CD4-positive, alpha-beta T cell (primary cell): ENCODE measurements at regions of chr17 and their contacts with region 1.

Region 1: GRCh38 chr17:50478391-50479381 is at the start of gene RSAD1:
- DNase-seq: peak; percentile 74 to 96 (median 84)
- ATAC-seq: peak; percentile 89
- H3K4me3 ChIP-seq: peak within 1 kb of the TSS; percentile 94
- H3K4me3 Mint-ChIP-seq: peak within 1 kb of the TSS; percentile 95
- H3K27ac ChIP-seq: peak within 1 kb of the TSS; percentile 68 to 83
- H3K27ac Mint-ChIP-seq: peak within 1 kb of the TSS; percentile 88
- H3K4me1 ChIP-seq: peaks cover 30% of the 10 kb centered on the region
- H3K4me1 Mint-ChIP-seq: peaks cover 23% of the 10 kb centered on the region
- H3K27me3 ChIP-seq: no peaks in the 10 kb centered on the region
- H3K27me3 Mint-ChIP-seq: no peaks in the 10 kb centered on the region
- CTCF ChIP-seq: peak; percentile 84
- total RNA-seq, gene RSAD1: 44.6 to 44.7 TPM

Region 2: GRCh38 chr17:50372758-50373556 is 105.7 kb before region 1 on chr17 and contains the starts of genes EME1 and MRPL27:
- CTCF ChIA-PET with region 1: no interaction called
- POLR2A ChIA-PET with region 1: no interaction called
- intact Hi-C with region 1: loop called in 1 of 2 experiments (anchors 5 kb)
- DNase-seq: peak; percentile 74 to 93 (median 80)
- ATAC-seq: peak; percentile 92
- H3K4me3 ChIP-seq: peak within 1 kb of the TSS; percentile 85
- H3K4me3 Mint-ChIP-seq: peak within 1 kb of the TSS; percentile 97
- H3K27ac ChIP-seq: peak within 1 kb of the TSS; percentile 97
- H3K27ac Mint-ChIP-seq: peak within 1 kb of the TSS; percentile 96
- H3K4me1 ChIP-seq: peaks cover 22% of the 10 kb centered on the region
- H3K4me1 Mint-ChIP-seq: peaks cover 22% of the 10 kb centered on the region
- H3K27me3 ChIP-seq: no peaks in the 10 kb centered on the region
- H3K27me3 Mint-ChIP-seq: no peaks in the 10 kb centered on the region
- CTCF ChIP-seq: no peak
- total RNA-seq, gene EME1: 0.36 to 0.92 TPM
- total RNA-seq, gene MRPL27: 13.7 to 14.8 TPM

Region 3: GRCh38 chr17:50425682-50426471 is 52.8 kb before region 1 on chr17 and contains the start of gene ACSF2:
- CTCF ChIA-PET with region 1: no interaction called
- POLR2A ChIA-PET with region 1: interaction called, 5 read pairs
- intact Hi-C with region 1: loop called in 1 of 2 experiments (anchors 2 kb)
- DNase-seq: peak; percentile 43 to 82 (median 65)
- ATAC-seq: peak; percentile 88
- H3K4me3 ChIP-seq: peak within 1 kb of the TSS; percentile 79
- H3K4me3 Mint-ChIP-seq: peak within 1 kb of the TSS; percentile 87
- H3K27ac ChIP-seq: peak within 1 kb of the TSS; percentile 51 to 63
- H3K27ac Mint-ChIP-seq: peak within 1 kb of the TSS; percentile 70
- H3K4me1 ChIP-seq: peaks cover 36% of the 10 kb centered on the region
- H3K4me1 Mint-ChIP-seq: peaks cover 45% of the 10 kb centered on the region
- H3K27me3 ChIP-seq: no peaks in the 10 kb centered on the region
- H3K27me3 Mint-ChIP-seq: no peaks in the 10 kb centered on the region
- CTCF ChIP-seq: no peak
- total RNA-seq, gene ACSF2: 11.9 to 13.9 TPM

Region 4: GRCh38 chr17:50541716-50542688 is 63.3 kb after region 1 on chr17:
- CTCF ChIA-PET with region 1: interaction called, 10 read pairs
- POLR2A ChIA-PET with region 1: no interaction called
- intact Hi-C with region 1: loop called in 1 of 2 experiments (anchors 10 kb)
- DNase-seq: peak; percentile 61 to 91 (median 79)
- ATAC-seq: peak; percentile 84
- H3K4me3 ChIP-seq: peak overlapping the region; percentile 65
- H3K4me3 Mint-ChIP-seq: peak overlapping the region; percentile 78
- H3K27ac ChIP-seq: no peak overlapping the region
- H3K27ac Mint-ChIP-seq: no peak overlapping the region
- H3K4me1 ChIP-seq: peaks cover 28% of the 10 kb centered on the region
- H3K4me1 Mint-ChIP-seq: peaks cover 22% of the 10 kb centered on the region
- H3K27me3 ChIP-seq: no peaks in the 10 kb centered on the region
- H3K27me3 Mint-ChIP-seq: peaks cover 6% of the 10 kb centered on the region
- CTCF ChIP-seq: peak; percentile 21

Region 5: DNA sequence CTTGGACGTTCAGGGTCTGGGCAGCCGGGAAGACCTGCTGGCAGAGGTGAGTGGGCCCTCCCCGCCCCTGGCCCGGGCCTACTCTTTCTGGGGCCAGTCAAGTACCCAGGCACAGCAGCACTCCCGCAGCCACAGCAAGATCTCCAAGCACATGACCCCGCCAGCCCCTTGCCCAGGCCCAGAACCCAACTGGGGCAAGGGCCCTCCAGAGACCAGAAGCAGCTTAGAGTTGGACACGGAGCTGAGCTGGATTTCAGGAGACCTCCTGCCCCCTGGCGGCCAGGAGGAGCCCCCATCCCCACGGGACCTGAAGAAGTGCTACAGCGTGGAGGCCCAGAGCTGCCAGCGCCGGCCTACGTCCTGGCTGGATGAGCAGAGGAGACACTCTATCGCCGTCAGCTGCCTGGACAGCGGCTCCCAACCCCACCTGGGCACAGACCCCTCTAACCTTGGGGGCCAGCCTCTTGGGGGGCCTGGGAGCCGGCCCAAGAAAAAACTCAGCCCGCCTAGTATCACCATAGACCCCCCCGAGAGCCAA is 147.4 kb after region 1 on chr17:
- CTCF ChIA-PET with region 1: interaction called, 6 read pairs
- POLR2A ChIA-PET with region 1: no interaction called
- intact Hi-C with region 1: loop called (anchors 1 to 2 kb)
- DNase-seq: peak; percentile 40 to 80 (median 54)
- ATAC-seq: peak; percentile 62
- H3K4me3 ChIP-seq: no peak overlapping the region
- H3K4me3 Mint-ChIP-seq: no peak overlapping the region
- H3K27ac ChIP-seq: no peak overlapping the region
- H3K27ac Mint-ChIP-seq: no peak overlapping the region
- H3K4me1 ChIP-seq: peaks cover 9% of the 10 kb centered on the region
- H3K4me1 Mint-ChIP-seq: no peaks in the 10 kb centered on the region
- H3K27me3 ChIP-seq: peaks cover 42 to 45% of the 10 kb centered on the region in 2 experiments
- H3K27me3 Mint-ChIP-seq: peaks cover 68% of the 10 kb centered on the region
- CTCF ChIP-seq: peak; percentile 55

Region 6: GRCh38 chr17:50841949-50842354 is 363.3 kb after region 1 on chr17:
- CTCF ChIA-PET with region 1: no interaction called
- POLR2A ChIA-PET with region 1: no interaction called
- intact Hi-C with region 1: loop called in 1 of 2 experiments (anchors 5 kb)
- DNase-seq: peak; percentile 23 to 72 (median 40)
- ATAC-seq: peak; percentile 62
- H3K4me3 ChIP-seq: no peak overlapping the region
- H3K4me3 Mint-ChIP-seq: no peak overlapping the region
- H3K27ac ChIP-seq: no peak overlapping the region
- H3K27ac Mint-ChIP-seq: no peak overlapping the region
- H3K4me1 ChIP-seq: peaks cover 5% of the 10 kb centered on the region
- H3K4me1 Mint-ChIP-seq: no peaks in the 10 kb centered on the region
- H3K27me3 ChIP-seq: no peaks in the 10 kb centered on the region
- H3K27me3 Mint-ChIP-seq: no peaks in the 10 kb centered on the region
- CTCF ChIP-seq: peak; percentile 62